ENCODE measurements at regions of chr6 and their contacts with region 1.

Region 1: GRCh38 chr6:33008944-33009861 is at the start of gene HLA-DOA:
- DNase-seq: peak; percentile 84
- H3K4me3 ChIP-seq: peak within 1 kb of the TSS; percentile 29 to 74 (median 46)
- H3K27ac ChIP-seq: peak within 1 kb of the TSS; percentile 51 to 96 (median 86)
- H3K4me1 ChIP-seq: peaks cover 4 to 42% (median 30%) of the 10 kb centered on the region in 6 donors
- H3K27me3 ChIP-seq: no peaks in the 10 kb centered on the region
- CTCF ChIP-seq: peak in 3 of 11 experiments; percentile 7 to 17 (median 12)
- POLR2A ChIP-seq: peak; percentile 64 to 81 (median 81)
- total RNA-seq, gene HLA-DOA: 30.8 to 89.5 (median 68.6) TPM

Region 2: GRCh38 chr6:33091957-33092356 is 82.8 kb after region 1 on chr6:
- intact Hi-C with region 1: loop called (anchors 10 kb)
- DNase-seq: no peak
- H3K4me3 ChIP-seq: no peak overlapping the region
- H3K27ac ChIP-seq: peak overlapping the region in 1 of 8 donors; percentile 39
- H3K4me1 ChIP-seq: peaks cover 0 to 21% (median 0%) of the 10 kb centered on the region in 6 donors
- H3K27me3 ChIP-seq: no peaks in the 10 kb centered on the region
- CTCF ChIP-seq: peak; percentile 34 to 75 (median 56)
- POLR2A ChIP-seq: no peak

Region 3: DNA sequence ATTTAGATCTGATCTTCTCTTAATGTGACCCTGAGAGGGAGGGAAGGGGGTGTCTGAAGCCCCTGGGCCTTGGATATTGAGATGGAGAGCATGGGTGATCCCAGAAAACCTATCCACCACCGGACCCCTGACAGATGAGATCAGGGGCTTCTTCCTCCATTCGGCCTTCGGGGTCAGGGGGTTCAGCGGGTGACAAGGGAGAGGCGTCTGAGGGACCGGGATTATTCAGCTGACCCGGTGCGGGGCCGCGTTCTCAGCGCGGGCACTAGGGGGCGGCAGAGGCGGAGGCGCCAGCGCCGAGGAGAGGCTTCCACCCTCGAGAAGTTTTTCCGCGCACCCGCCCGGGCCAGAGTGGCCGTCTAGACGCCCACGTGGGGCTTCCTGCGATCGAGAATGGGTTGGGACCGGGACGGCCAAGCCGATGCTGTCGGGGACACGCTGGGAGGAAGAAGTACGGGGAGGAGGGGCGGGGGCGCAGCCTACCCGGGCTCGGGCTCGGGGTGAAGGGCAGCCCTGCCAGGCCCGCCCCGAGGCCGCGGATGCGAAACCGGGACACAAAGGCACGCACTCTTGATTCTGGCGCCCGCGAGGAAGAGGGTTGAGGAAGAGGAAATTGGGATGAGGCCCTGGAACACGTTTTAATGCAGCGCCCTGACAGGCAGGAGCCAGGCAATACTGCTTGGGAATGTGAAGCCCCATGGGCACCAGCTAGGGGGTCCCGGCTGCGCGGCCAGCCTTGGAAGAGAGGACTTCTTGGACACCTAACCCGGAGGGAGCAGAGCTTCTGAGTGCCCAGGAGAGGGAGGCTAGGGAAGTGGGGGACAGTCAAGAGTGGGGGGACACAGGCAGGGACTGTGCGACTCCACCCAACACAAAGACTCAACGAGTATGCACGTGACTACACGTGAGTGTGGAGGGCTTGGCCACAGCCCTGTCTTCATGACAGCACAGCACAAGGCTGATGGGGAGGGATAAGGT is 152.4 kb after region 1 on chr6:
- intact Hi-C with region 1: no loop called
- DNase-seq: peak; percentile 96
- H3K4me3 ChIP-seq: peak overlapping the region; percentile 24 to 69 (median 45)
- H3K27ac ChIP-seq: peak overlapping the region in 6 of 8 donors; percentile 44 to 72 (median 60)
- H3K4me1 ChIP-seq: peaks cover 0 to 22% (median 15%) of the 10 kb centered on the region in 6 donors
- H3K27me3 ChIP-seq: no peaks in the 10 kb centered on the region
- CTCF ChIP-seq: peak; percentile 81 to 98 (median 94)
- POLR2A ChIP-seq: no peak

Region 4: GRCh38 chr6:33235221-33235634 is 226.0 kb after region 1 on chr6:
- intact Hi-C with region 1: loop called (anchors 10 kb)
- DNase-seq: no peak
- H3K4me3 ChIP-seq: no peak overlapping the region
- H3K27ac ChIP-seq: no peak overlapping the region
- H3K4me1 ChIP-seq: no peaks in the 10 kb centered on the region
- H3K27me3 ChIP-seq: peaks cover 0 to 50% (median 0%) of the 10 kb centered on the region in 7 donors
- CTCF ChIP-seq: no peak
- POLR2A ChIP-seq: no peak